ENCODE measurements at regions of chr11 and their contacts with region 1.

Region 1: GRCh38 chr11:16097543-16097942 is 258.8 kb downstream of the SOX6 start:
- DNase-seq: peak; percentile 80
- H3K4me3 Mint-ChIP-seq: no peak overlapping the region
- H3K27ac Mint-ChIP-seq: no peak overlapping the region
- H3K4me1 Mint-ChIP-seq: peaks cover 31% of the 10 kb centered on the region
- H3K27me3 Mint-ChIP-seq: no peaks in the 10 kb centered on the region
- CTCF ChIP-seq: no peak

Region 2: GRCh38 chr11:16111690-16112089 is 14.1 kb after region 1 on chr11:
- CTCF ChIA-PET with region 1: interaction called, 3 read pairs
- POLR2A ChIA-PET with region 1: interaction called, 38 read pairs
- intact Hi-C with region 1: no loop called
- DNase-seq: no peak
- H3K4me3 Mint-ChIP-seq: no peak overlapping the region
- H3K27ac Mint-ChIP-seq: peak overlapping the region; percentile 50
- H3K4me1 Mint-ChIP-seq: no peaks in the 10 kb centered on the region
- H3K27me3 Mint-ChIP-seq: no peaks in the 10 kb centered on the region
- CTCF ChIP-seq: no peak

Region 3: GRCh38 chr11:16347928-16348685 is 250.6 kb after region 1 on chr11:
- CTCF ChIA-PET with region 1: no interaction called
- POLR2A ChIA-PET with region 1: interaction called, 25 read pairs
- intact Hi-C with region 1: no loop called
- DNase-seq: peak; percentile 17
- H3K4me3 Mint-ChIP-seq: no peak overlapping the region
- H3K27ac Mint-ChIP-seq: no peak overlapping the region
- H3K4me1 Mint-ChIP-seq: peaks cover 13% of the 10 kb centered on the region
- H3K27me3 Mint-ChIP-seq: no peaks in the 10 kb centered on the region
- CTCF ChIP-seq: no peak

Measured in MCF 10A (cell line).